Ascending aorta (tissue), 2 donors: ENCODE measurements at regions of chr14 and their contacts with region 1.

Region 1: DNA sequence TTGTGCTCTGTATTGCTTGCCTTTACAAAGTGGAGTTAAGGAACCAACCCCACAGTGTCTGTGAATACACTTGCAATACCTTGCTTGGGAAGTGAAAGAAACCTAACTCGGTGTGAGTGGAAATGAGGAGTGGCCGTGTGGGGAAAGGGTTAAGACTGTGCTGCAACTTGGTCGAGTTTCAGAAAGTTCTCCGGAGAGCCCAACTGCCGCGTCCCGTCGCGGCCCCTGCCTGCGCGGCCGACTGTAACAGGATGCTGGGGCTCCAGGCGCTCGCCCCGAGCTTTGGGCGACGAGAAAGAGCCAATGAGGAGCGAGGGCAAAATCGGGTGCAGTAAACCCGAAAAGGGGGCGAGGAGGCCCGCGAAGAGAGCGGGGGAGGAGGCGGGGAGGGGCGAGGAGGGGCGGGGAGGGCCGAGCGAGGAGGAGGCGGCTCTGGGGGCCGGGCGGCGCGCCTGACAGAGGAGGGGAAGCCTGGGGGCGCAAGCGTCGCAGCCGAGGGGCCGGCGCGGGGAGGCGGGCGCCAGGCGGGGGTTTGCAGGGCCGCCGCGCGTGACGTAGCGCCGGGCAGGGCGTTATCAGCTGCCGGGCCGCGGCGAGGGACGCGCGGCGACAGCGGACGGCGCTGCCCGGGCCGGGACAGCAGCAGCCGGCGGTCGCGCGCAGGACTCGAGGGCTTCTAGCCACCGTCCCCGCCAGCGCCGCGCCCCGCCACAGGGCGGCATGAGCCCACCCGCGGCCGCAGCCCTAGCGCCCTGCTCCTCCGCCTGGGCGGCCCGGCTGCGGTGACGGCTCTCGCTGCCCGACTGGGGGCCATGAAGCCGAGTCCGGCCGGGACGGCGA is at the start of gene DACT1:
- DNase-seq: peak in 1 of 2 donors; percentile 84
- H3K4me3 ChIP-seq: peak within 1 kb of the TSS; percentile 95 to 99
- H3K27ac ChIP-seq: peak within 1 kb of the TSS; percentile 99
- H3K4me1 ChIP-seq: peaks cover 0 to 15% of the 10 kb centered on the region in 2 donors
- H3K27me3 ChIP-seq: no peaks in the 10 kb centered on the region
- CTCF ChIP-seq: peak in 1 of 3 experiments; percentile 28
- total RNA-seq, gene DACT1: 46.0 TPM

Region 2: DNA sequence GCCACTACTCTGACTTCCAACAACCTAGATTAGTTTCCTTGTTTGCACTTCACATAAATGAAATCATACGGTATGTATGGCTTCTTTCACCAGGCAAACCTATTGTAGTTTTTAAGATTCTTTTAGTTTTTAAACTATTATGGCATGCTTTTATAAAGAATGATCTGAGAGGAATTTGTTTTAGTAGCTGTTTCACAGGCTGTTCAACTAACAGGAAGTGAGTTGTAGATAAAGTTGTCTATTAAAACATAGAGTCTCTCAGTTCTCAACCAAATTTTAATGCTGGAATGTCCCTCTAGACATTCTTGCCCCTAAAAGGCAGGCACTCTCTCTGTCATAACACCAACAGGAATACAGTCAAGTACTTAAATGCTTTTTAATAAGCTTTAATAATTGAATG is 102.6 kb before region 1 on chr14:
- intact Hi-C with region 1: loop called (anchors 2 kb)
- DNase-seq: no peak
- H3K4me3 ChIP-seq: no peak overlapping the region
- H3K27ac ChIP-seq: peak overlapping the region; percentile 83 to 94
- H3K4me1 ChIP-seq: peaks cover 7 to 20% of the 10 kb centered on the region in 2 donors
- H3K27me3 ChIP-seq: no peaks in the 10 kb centered on the region
- CTCF ChIP-seq: no peak

Region 3: DNA sequence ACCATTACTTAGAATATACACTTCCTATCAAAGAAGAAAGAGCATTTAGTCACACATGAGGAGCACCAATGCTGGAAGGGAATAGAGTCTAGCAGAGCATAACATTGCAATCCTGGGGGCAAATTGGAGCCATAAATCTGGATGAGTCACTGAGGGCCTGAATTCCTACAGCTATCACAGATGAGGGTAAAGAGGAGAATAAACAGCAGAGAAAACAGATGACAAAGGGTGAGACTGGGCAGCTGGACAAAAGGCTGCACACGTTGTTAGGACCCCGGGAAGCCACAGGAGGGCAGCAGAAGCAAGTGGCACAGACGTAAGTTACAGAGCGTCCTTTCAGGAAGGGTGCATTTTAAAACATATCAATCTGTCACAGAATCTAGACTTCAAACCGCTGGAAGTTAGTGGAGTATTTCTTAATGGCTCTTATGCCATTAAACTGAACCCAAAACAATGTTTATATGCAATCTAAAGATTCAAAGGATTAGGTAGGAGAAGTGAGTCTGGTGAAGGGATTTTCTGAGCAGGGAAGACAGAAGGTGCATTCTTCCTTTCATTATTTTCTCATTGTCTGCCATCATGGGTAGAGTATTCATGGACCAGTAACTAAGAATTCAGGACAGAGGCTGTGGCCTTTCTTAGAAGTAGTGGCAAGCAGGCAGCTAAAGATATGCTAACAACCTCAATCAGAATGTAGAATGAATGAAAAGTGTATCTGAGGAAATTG is 391.0 kb after region 1 on chr14:
- intact Hi-C with region 1: loop called (anchors 10 kb)
- DNase-seq: peak in 1 of 2 donors; percentile 68
- H3K4me3 ChIP-seq: no peak overlapping the region
- H3K27ac ChIP-seq: no peak overlapping the region
- H3K4me1 ChIP-seq: no peaks in the 10 kb centered on the region
- H3K27me3 ChIP-seq: no peaks in the 10 kb centered on the region
- CTCF ChIP-seq: peak; percentile 47 to 81 (median 66)

Region 4: DNA sequence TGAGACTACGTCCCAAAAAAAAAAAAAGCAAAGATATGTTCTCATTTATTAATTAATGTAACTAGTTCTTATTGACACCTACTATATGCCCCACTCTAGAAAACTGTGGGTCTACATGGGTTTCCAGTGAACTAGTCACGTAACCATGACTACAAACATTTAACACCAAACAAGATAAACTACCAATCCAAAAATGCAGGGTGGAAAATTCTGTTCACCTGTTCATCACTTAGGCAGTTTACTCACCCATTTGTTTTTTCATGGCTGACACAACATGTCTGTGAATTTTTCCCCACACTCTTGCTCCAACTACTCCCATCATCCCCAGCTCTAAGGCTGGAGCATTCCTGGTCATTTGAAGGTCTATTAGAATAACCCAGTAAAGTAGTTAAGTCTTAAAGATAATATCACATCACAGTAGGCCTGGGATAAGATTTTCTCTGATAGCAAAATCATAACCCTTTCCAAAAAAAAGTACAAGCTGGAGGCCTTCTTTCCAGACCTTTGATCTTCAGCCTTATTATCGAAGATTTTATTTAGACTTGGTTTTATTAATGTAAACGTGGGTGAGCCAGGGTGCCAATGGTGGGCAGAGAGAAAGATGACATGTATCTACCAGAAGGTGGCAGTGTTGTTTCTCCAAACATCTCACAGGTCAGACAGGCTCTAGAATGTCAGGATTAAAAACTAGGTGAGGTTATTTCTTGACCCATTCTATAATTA is 489.3 kb after region 1 on chr14:
- intact Hi-C with region 1: loop called (anchors 5 kb)
- DNase-seq: no peak
- H3K4me3 ChIP-seq: no peak overlapping the region
- H3K27ac ChIP-seq: no peak overlapping the region
- H3K4me1 ChIP-seq: no peaks in the 10 kb centered on the region
- H3K27me3 ChIP-seq: no peaks in the 10 kb centered on the region
- CTCF ChIP-seq: peak; percentile 77 to 81 (median 78)

Region 5: DNA sequence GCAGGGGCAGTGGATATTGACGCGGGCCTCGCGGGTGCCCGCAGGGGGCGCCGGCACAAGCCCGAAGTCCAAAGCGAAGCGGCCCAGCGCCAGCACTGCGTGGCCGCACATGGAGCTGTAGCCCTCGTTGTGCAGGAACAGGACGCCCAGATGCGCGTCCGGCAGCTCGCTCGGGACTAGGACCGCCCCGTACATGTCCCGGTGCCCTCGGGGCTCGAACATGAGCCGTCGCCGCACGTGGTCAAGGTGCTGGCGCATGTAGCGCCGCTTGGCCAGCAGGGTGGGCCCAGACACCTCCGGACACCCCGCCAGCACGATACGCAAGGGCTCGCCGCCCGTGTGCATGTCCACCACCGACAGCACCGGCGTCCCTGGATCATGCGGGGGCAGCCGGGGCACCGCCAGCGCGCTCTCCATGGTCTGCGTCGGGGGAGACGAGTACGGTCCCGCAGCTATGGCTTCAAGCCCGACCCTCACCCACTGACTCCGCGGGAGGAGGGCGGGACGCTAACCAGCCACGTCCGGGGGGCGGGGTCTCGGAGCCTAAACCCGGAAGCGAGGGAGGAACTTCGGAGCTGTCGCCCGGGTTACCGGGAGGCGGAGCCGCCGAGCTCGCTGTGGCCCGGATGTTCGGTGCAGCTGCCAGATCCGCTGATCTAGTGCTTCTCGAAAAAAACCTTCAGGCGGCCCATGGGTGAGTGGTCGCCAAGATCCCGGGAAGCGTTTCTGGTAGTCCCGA is 846.5 kb after region 1 on chr14 and contains the starts of genes JKAMP and L3HYPDH:
- intact Hi-C with region 1: loop called (anchors 5 kb)
- DNase-seq: peak; percentile 90 to 98
- H3K4me3 ChIP-seq: peak within 1 kb of the TSS; percentile 76 to 96
- H3K27ac ChIP-seq: peak within 1 kb of the TSS; percentile 85 to 96
- H3K4me1 ChIP-seq: peaks cover 5 to 20% of the 10 kb centered on the region in 2 donors
- H3K27me3 ChIP-seq: no peaks in the 10 kb centered on the region
- CTCF ChIP-seq: peak; percentile 50 to 74 (median 70)
- total RNA-seq, gene JKAMP: 28.2 TPM
- total RNA-seq, gene L3HYPDH: 35.0 TPM